Posterior cingulate gyrus (tissue), 11 donors: ENCODE measurements at regions of chr9 and their contacts with region 1.

Region 1: GRCh38 chr9:38362852-38363593 is 29.5 kb upstream of the ALDH1B1 start:
- DNase-seq: peak in 5 of 10 donors; percentile 23 to 88 (median 40)

Region 2: DNA sequence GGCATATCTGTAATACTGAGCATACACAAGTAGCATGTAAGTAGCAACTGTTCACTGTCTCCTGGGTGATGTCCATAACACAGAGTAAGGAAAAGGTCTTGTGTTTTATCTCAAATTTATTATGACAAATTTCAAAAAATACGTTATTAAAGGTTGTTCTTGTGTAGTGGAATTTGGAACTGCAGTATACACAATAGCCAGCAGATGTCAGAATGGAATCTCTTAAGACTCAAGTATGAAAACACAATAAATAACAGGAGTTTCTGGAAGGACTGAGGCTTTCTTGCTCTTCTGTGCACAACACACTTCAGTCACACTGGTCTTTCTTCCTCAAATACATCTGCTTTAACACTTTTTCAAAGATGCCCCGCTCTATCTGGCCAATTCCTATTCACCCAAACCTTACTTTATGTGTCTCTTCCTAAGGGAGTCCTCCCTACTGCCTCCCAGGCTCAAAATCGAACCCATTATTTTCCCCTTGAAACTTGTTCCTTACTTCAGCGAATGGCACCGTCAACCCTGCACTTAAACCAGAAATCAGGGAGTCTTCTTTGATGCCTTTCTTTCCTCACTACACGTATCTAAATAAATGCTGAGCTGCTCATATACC is 780.4 kb before region 1 on chr9:
- intact Hi-C with region 1: loop called (anchors 10 kb)
- DNase-seq: no peak

Region 3: DNA sequence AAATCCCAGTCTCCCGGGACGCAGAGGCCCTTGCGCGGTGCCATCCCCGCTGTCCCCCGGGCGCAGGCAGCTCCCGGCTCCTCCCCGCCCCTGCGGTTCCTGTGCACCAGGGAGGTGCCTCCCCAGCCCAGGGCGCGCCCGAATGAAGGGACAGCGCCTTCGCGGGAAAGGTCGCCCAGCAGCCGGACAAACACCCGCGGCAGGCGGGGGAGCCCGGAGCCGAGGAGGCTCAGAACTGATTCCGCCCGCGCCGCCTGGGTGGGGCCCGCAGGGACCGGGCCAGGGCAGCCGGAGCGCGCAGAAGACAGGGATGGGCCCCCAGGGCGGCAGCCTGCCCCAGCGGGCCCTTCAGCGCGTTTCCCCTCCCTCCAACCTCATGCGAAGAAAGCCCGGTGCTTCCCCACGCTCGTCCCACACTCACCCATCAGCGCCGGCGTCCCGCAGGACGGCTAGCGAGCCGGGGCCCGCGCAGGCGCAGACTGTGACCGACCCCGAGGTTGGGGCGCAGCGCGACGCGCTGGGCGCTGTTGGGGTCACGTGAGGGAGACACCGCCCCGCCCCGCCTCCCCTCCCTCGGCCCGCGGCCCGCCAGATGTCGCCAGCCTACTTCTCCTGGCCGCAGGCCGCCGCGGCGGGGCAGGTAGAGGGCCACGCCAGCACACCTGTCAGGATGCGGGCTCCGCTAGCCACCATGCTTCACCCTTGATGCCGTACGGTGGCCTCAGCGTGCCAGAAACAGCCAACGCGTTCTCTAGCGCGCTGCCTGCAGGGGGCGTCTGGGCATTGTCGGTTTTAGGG is 459.2 kb before region 1 on chr9 and contains the start of gene SLC25A51:
- intact Hi-C with region 1: loop called (anchors 2 kb)
- DNase-seq: peak; percentile 87 to 98 (median 92)

Region 4: DNA sequence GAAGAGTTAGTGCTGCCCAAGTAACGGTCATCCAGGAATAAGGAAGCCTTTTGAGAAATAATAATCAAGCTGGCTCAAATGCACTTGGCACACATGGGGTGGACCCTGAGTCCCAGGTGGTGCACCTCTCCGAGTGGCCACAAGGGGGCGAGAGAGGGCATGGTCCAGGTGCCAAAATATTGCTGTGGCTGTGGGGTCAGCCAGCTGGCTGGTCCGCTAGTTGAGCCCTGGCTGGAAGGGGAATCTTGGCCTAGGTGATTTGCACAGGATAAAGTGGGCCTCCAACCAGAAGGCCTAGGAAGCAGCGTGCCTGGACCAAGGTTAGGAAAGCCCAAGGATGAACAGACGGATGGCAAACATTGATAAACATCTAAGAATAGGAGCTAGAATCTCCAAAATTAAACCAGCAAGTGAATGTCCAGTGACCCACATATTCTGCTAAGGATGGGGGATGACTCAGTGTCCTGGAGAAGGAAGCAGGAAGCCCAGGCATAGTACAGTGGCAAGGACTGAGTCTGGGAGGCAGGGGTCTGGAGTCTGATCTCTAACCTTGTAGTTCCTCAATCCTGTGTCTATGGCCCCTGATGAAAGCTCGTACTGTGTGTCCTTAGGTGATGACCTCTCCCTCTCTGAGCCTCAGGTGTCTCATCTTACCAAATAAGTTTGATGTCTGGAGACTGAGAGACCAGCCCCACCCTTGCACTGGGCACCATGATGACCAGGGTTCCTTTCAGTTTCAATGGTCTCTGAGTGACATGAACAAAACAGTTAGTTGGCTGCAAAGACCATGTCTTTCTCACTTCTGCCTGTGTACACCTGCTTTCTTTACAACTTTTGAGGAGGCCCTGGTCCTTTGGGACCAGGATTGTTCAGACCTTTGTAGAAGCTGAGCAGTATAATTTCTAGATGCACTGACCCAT is 274.8 kb before region 1 on chr9:
- intact Hi-C with region 1: loop called (anchors 10 kb)
- DNase-seq: peak; percentile 36 to 96 (median 82)

Region 5: DNA sequence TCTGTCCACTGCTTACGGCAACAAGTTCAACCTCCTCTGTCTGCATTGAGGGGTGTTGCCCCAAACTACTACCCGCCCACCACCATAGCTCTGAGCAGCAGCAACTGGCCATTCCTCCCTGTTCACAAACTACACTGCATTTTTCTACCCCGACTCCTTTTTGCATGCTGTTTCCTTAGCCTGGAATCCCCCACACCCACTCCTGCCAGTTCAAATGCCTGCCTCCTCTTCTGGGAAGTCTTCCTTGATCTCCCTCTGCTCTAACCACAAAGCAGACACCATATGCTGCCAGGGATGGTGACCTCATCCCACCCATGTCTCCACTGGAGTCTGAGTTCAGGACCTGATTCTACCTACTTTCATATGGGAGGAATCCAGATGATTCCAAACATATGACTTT is 42.8 kb after region 1 on chr9:
- intact Hi-C with region 1: no loop called
- DNase-seq: no peak

Region 6: GRCh38 chr9:38507587-38507986 is 144.6 kb after region 1 on chr9:
- intact Hi-C with region 1: no loop called
- DNase-seq: no peak